CD4-positive, alpha-beta T cell (primary cell): ENCODE measurements at regions of chr1 and their contacts with region 1.

Region 1: DNA sequence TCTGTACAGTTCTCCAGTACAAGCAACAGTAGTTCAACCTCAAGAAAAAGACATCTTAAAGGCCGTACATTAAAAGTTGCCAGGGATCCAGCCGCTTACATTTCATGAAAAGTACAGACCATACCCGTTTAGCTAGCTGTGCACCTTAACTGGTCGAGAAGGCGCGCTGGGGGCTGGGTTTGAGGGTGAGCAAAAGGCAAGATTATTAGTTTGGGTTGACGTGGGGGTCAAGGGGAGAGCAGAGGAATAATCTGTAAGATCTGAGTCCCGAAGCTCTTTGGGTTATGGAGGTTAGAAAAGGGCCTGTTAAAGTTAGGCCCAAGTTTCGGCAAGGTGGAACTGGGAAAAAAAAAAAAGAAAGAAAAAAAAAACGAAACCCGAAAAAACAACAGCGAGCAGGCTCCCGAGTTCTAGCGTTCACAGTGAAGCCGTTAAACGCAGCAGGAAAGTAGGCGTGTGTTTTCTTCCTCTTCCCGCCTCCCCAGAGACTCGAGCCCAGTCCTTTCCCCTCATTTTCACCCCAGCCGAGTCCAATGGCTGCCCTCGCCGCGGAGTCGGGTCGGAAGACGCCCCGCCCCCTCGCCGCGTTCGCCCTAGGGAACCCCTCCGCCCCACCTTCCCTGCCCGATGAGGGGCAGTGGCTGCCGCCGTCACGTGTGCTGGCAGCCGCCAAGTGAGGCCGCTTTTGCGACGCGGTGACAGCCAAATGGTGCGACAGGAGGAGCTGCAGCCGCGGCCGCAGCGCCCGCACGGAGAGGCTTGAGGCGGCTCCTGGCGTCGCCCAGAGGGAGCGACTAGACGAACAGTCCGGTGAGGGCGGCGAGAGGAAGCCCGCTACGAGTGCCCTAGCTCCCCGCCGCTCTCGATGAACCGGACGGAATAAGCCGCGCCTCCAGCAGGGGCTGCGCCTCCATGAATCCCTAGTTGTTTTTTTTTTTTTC is at the start of gene PKN2:
- DNase-seq: peak; percentile 93 to 100 (median 96)
- ATAC-seq: peak; percentile 93
- H3K4me3 ChIP-seq: peak within 1 kb of the TSS; percentile 95
- H3K4me3 Mint-ChIP-seq: peak within 1 kb of the TSS; percentile 93
- H3K27ac ChIP-seq: peak within 1 kb of the TSS; percentile 92 to 94
- H3K27ac Mint-ChIP-seq: peak within 1 kb of the TSS; percentile 95
- H3K4me1 ChIP-seq: peaks cover 15% of the 10 kb centered on the region
- H3K4me1 Mint-ChIP-seq: peaks cover 45% of the 10 kb centered on the region
- H3K27me3 ChIP-seq: no peaks in the 10 kb centered on the region
- H3K27me3 Mint-ChIP-seq: no peaks in the 10 kb centered on the region
- CTCF ChIP-seq: peak; percentile 31
- total RNA-seq, gene PKN2: 38.8 to 41.4 TPM

Region 2: DNA sequence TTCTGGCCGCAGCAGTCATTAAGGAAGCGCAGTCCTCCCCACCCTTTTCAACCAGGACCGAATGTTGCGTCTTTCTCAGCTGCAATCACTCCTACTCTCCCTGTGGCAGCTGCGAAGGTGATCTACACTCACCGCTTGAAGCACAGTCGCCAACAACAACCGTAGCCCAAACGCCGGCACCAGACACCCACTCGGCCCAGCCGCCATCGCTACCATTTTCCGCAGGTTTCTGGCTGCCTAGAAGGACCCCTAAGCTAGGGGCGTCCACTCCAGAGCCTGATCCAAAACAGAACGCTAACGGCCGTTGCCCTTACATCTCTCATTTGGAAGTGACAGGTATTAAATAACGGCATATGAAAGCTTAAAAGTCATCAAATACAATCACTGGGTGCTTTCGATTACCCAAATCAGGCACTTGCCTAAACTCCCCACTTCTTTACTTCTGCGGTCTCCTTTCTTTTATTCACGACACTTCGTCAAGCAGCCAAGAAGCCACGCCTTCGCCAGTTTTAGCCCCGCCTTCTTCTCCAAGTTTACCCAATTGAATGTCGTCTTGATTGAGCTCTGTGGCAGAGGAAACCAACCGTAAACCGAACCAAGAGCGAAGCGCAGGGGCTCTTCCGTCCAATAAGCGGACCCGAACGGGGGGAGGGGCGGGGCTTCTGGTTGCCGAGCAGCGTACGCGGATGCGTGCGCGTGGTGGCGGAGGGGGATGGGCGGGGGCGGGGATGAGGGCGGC is 1769.7 kb before region 1 on chr1 and contains the start of gene SELENOF:
- CTCF ChIA-PET with region 1: no interaction called
- POLR2A ChIA-PET with region 1: interaction called, 11 read pairs
- intact Hi-C with region 1: no loop called
- DNase-seq: peak; percentile 98 to 100 (median 99)
- ATAC-seq: peak; percentile 88
- H3K4me3 ChIP-seq: peak within 1 kb of the TSS; percentile 90
- H3K4me3 Mint-ChIP-seq: no peak within 1 kb of the TSS
- H3K27ac ChIP-seq: peak within 1 kb of the TSS; percentile 95 to 96
- H3K27ac Mint-ChIP-seq: no peak within 1 kb of the TSS
- H3K4me1 ChIP-seq: peaks cover 25% of the 10 kb centered on the region
- H3K4me1 Mint-ChIP-seq: peaks cover 53% of the 10 kb centered on the region
- H3K27me3 ChIP-seq: no peaks in the 10 kb centered on the region
- H3K27me3 Mint-ChIP-seq: no peaks in the 10 kb centered on the region
- CTCF ChIP-seq: no peak
- total RNA-seq, gene SELENOF: 74.1 to 74.9 TPM

Region 3: DNA sequence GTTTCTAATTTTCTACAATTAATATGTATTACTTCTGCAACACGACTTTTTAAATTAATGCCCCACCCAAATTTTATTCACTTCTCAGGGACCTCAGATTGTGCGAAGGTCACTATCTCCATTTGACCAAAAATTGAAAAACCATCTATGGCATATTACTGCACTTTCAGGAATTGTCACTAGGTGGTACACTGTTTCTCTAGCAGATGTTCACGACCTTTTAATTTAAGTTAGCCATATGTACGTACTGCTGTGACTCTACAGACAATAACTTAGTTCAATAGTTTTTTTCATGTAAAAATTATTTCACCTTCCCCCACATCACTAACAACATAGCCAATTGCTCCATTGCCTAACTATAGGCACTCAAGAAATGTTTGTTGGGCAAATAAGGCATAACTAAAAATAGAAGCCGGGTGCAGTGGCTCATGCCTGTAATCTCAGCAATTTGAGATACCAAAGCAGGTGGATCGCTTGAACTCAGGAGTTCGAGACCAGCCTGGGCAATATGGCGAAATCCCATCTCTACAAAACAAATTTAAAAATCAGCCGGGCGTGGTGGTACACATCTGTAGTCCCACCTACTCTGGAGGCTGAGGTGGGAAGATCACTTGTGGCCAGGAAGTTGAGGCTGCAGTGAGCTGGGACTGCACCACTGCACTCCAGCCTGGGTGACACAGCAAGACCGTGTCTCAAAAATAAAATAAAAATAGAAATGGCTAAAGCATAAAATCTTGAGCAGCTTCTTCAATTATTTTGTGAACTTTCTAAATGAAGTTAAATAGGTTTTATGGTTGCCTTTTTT is 75.5 kb before region 1 on chr1:
- CTCF ChIA-PET with region 1: no interaction called
- POLR2A ChIA-PET with region 1: no interaction called
- intact Hi-C with region 1: no loop called
- DNase-seq: peak in 3 of 14 experiments; percentile 7 to 38 (median 37)
- ATAC-seq: peak; percentile 41
- H3K4me3 ChIP-seq: no peak overlapping the region
- H3K4me3 Mint-ChIP-seq: no peak overlapping the region
- H3K27ac ChIP-seq: no peak overlapping the region
- H3K27ac Mint-ChIP-seq: no peak overlapping the region
- H3K4me1 ChIP-seq: no peaks in the 10 kb centered on the region
- H3K4me1 Mint-ChIP-seq: no peaks in the 10 kb centered on the region
- H3K27me3 ChIP-seq: no peaks in the 10 kb centered on the region
- H3K27me3 Mint-ChIP-seq: peaks cover 5% of the 10 kb centered on the region
- CTCF ChIP-seq: peak; percentile 62

Region 4: GRCh38 chr1:88640060-88640459 is 43.8 kb before region 1 on chr1:
- CTCF ChIA-PET with region 1: no interaction called
- POLR2A ChIA-PET with region 1: no interaction called
- intact Hi-C with region 1: no loop called
- DNase-seq: no peak
- ATAC-seq: no peak
- H3K4me3 ChIP-seq: no peak overlapping the region
- H3K4me3 Mint-ChIP-seq: no peak overlapping the region
- H3K27ac ChIP-seq: no peak overlapping the region
- H3K27ac Mint-ChIP-seq: no peak overlapping the region
- H3K4me1 ChIP-seq: no peaks in the 10 kb centered on the region
- H3K4me1 Mint-ChIP-seq: no peaks in the 10 kb centered on the region
- H3K27me3 ChIP-seq: no peaks in the 10 kb centered on the region
- H3K27me3 Mint-ChIP-seq: peaks cover 20% of the 10 kb centered on the region
- CTCF ChIP-seq: no peak

Region 5: GRCh38 chr1:88661951-88662699 is 21.7 kb before region 1 on chr1:
- CTCF ChIA-PET with region 1: interaction called, 9 read pairs
- POLR2A ChIA-PET with region 1: interaction called, 25 read pairs
- intact Hi-C with region 1: loop called in 1 of 2 experiments (anchors 2 kb)
- DNase-seq: no peak
- ATAC-seq: no peak
- H3K4me3 ChIP-seq: no peak overlapping the region
- H3K4me3 Mint-ChIP-seq: no peak overlapping the region
- H3K27ac ChIP-seq: no peak overlapping the region
- H3K27ac Mint-ChIP-seq: peak overlapping the region; percentile 48
- H3K4me1 ChIP-seq: peaks cover 7% of the 10 kb centered on the region
- H3K4me1 Mint-ChIP-seq: peaks cover 36% of the 10 kb centered on the region
- H3K27me3 ChIP-seq: no peaks in the 10 kb centered on the region
- H3K27me3 Mint-ChIP-seq: peaks cover 4% of the 10 kb centered on the region
- CTCF ChIP-seq: no peak

Region 6: DNA sequence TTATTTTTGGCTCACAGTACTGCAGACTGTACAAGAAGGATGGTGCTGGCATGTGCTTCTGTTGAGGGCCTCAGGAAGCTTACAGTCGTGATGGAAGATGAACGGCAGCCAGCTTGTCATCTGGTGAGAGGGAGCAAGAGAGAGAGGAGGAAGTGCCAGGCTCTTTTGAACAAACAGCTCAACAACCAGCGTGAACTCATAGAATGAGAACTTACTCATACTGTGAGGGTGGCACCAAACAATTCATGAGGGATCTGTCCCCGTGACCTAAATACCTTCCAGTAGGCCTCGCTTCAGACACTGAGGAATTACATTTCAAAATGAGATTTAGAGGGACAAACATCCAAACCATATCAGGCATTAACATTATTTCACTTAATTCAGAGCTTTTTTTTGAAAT is 85.0 kb after region 1 on chr1:
- CTCF ChIA-PET with region 1: no interaction called
- POLR2A ChIA-PET with region 1: no interaction called
- intact Hi-C with region 1: loop called in 1 of 2 experiments (anchors 5 kb)
- DNase-seq: no peak
- ATAC-seq: no peak
- H3K4me3 ChIP-seq: no peak overlapping the region
- H3K4me3 Mint-ChIP-seq: no peak overlapping the region
- H3K27ac ChIP-seq: no peak overlapping the region
- H3K27ac Mint-ChIP-seq: peak overlapping the region; percentile 55
- H3K4me1 ChIP-seq: no peaks in the 10 kb centered on the region
- H3K4me1 Mint-ChIP-seq: peaks cover 6% of the 10 kb centered on the region
- H3K27me3 ChIP-seq: no peaks in the 10 kb centered on the region
- H3K27me3 Mint-ChIP-seq: no peaks in the 10 kb centered on the region
- CTCF ChIP-seq: no peak

Region 7: DNA sequence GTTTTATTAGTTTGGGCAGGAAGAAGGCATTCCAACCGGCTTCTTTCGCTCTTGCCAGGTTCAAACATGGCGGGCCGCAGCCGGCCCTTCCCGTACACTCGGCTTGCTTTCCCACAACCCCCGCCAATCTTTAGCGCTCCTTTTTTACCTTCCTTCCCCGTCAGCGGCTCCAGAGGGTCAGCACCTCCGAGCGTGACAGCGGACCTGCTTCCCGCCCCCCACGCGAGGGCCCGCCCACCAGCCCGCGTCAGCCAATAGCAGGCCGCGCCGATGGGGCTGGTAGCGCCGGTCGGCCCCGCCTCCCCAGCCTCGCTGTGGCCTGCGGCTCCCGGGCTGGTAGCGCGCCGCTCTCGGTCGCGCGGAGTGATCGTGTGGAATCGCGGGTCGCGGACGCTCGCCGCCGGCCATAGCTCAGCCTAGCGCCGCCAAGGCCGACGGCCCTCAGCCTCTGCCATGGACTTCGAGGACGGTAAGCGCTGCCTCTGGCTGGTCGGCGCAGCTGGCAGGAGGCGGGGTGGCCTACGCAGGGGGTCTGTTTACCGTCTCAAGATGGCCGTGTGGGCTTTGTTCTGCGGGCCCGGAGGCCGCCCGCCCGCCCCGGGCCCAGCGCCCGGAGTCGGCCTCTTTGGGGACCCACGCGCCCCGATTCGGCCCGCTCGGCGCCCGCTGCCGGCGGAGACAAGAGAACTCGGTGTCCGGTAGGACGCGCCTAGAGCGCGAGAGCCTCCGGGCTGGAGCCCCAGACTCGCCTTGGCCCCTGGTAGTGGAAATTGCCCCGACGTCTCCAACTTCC is 1311.2 kb after region 1 on chr1 and contains the start of gene ZNF326:
- CTCF ChIA-PET with region 1: no interaction called
- POLR2A ChIA-PET with region 1: no interaction called
- intact Hi-C with region 1: loop called in 1 of 2 experiments (anchors 10 kb)
- DNase-seq: peak; percentile 83 to 96 (median 92)
- ATAC-seq: peak; percentile 96
- H3K4me3 ChIP-seq: peak within 1 kb of the TSS; percentile 89
- H3K4me3 Mint-ChIP-seq: peak within 1 kb of the TSS; percentile 98
- H3K27ac ChIP-seq: peak within 1 kb of the TSS; percentile 64 to 70
- H3K27ac Mint-ChIP-seq: peak within 1 kb of the TSS; percentile 95
- H3K4me1 ChIP-seq: peaks cover 17% of the 10 kb centered on the region
- H3K4me1 Mint-ChIP-seq: peaks cover 47% of the 10 kb centered on the region
- H3K27me3 ChIP-seq: no peaks in the 10 kb centered on the region
- H3K27me3 Mint-ChIP-seq: no peaks in the 10 kb centered on the region
- CTCF ChIP-seq: no peak
- total RNA-seq, gene ZNF326: 56.2 to 58.7 TPM